PC-9 (cell line): ENCODE measurements at regions of chr5 and their contacts with region 1.

Region 1: GRCh38 chr5:103953601-103954382 is 391.2 kb upstream of the NUDT12 start:
- DNase-seq: no peak
- H3K4me3 ChIP-seq: no peak overlapping the region
- H3K27ac ChIP-seq: no peak overlapping the region
- H3K4me1 ChIP-seq: no peaks in the 10 kb centered on the region
- H3K27me3 ChIP-seq: no peaks in the 10 kb centered on the region
- CTCF ChIP-seq: no peak

Region 2: GRCh38 chr5:102886586-102886985 is 1067.2 kb before region 1 on chr5:
- CTCF ChIA-PET with region 1: no interaction called
- POLR2A ChIA-PET with region 1: no interaction called
- intact Hi-C with region 1: no loop called
- DNase-seq: no peak
- H3K4me3 ChIP-seq: no peak overlapping the region
- H3K27ac ChIP-seq: no peak overlapping the region
- H3K4me1 ChIP-seq: no peaks in the 10 kb centered on the region
- H3K27me3 ChIP-seq: no peaks in the 10 kb centered on the region
- CTCF ChIP-seq: no peak

Region 3: DNA sequence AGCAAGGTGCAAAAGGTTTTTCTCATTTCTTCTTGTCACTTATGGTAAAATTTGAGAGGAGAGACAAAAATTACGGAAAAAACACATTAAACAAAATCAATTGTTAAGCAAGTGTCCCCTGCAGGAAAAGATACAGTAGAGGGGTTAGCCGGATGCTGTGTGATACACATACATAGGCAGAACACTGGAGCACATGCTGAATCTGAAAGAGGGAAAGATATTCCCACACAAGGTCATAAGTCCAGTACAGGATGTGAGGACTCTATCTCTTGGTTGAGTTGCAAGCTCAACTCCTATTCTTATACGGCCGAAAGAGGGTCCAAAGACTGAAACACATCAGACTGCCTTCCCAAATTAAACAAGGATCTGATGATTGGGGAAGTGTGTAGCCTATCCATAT is 36.3 kb after region 1 on chr5:
- CTCF ChIA-PET with region 1: interaction called, 14 read pairs
- POLR2A ChIA-PET with region 1: no interaction called
- intact Hi-C with region 1: no loop called
- DNase-seq: no peak
- H3K4me3 ChIP-seq: no peak overlapping the region
- H3K27ac ChIP-seq: no peak overlapping the region
- H3K4me1 ChIP-seq: no peaks in the 10 kb centered on the region
- H3K27me3 ChIP-seq: no peaks in the 10 kb centered on the region
- CTCF ChIP-seq: no peak